ENCODE measurements at regions of chr6 and their contacts with region 1.

Region 1: GRCh38 chr6:109187399-109188114 is 92.2 kb downstream of the CEP57L1 start:
- DNase-seq: peak; percentile 25
- H3K4me3 Mint-ChIP-seq: no peak overlapping the region
- H3K27ac Mint-ChIP-seq: no peak overlapping the region
- H3K4me1 Mint-ChIP-seq: no peaks in the 10 kb centered on the region
- H3K27me3 Mint-ChIP-seq: peaks cover 39% of the 10 kb centered on the region

Region 2: DNA sequence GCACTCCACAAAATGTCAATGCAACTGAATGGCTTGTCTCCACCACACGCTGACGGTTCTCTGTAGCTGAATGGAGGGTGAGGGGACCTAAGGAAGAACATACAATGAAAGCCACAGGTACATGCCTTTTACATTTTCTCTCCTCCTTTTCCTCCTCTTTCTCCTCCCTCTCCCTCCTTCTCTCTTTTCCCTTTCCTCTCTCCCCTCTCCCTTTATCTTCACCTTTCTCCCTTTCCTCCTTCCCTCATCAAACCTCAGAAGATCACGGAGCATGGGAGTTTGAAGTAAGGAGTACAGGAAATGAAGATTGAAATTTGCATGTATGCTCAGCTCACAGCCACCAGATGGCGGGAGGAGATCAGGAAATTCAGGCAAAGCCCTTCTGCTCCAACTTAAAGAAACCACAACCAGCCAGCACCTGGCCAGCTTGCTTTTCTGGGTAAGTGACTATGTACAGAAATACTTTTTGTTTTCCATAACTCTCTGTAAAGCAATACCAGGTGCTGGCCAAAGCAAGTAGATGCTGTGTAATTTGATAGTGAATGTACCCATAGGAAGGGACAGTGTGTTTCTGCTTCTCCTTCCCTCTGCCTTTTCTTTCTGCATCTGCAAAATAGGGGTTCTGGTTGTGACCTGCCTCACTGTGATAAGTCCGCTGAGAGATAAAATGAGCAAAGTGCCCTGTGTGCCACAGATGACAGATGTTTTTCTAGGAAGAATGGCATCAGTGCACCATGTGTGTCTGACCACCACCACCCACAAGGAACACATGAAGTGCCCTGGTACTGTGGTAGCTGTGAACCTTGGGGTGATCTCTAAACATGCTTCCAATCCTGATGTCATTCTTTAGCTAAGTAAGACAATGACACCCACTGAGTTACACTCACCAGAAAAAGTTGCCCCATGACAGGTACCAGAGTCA is 645.5 kb before region 1 on chr6:
- intact Hi-C with region 1: loop called (anchors 1 kb)
- DNase-seq: peak; percentile 52
- H3K4me3 Mint-ChIP-seq: no peak overlapping the region
- H3K27ac Mint-ChIP-seq: no peak overlapping the region
- H3K4me1 Mint-ChIP-seq: peaks cover 10% of the 10 kb centered on the region
- H3K27me3 Mint-ChIP-seq: peaks cover 39% of the 10 kb centered on the region

Region 3: DNA sequence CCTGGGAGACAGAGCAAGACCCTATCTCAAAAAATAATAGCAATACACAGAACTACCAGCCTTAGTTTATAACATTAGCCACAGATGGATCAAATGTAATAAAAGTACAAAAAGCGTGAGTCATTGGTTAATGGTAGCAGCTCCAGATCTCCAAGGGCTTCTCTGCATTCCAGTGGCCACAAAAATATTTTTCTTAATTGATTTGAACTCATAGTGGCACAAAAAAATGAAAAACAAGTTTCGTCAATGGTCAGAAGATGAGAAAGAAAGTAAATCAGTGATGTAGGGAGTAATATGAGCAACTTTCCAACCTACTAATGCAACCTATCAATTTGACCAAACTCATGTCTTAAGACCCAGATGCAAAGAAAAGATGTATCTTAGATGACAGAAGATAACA is 12.6 kb before region 1 on chr6:
- intact Hi-C with region 1: no loop called
- DNase-seq: no peak
- H3K4me3 Mint-ChIP-seq: no peak overlapping the region
- H3K27ac Mint-ChIP-seq: no peak overlapping the region
- H3K4me1 Mint-ChIP-seq: no peaks in the 10 kb centered on the region
- H3K27me3 Mint-ChIP-seq: peaks cover 13% of the 10 kb centered on the region

Region 4: GRCh38 chr6:109308018-109308492 is 120.5 kb after region 1 on chr6:
- intact Hi-C with region 1: loop called (anchors 10 kb)
- DNase-seq: no peak
- H3K4me3 Mint-ChIP-seq: no peak overlapping the region
- H3K27ac Mint-ChIP-seq: no peak overlapping the region
- H3K4me1 Mint-ChIP-seq: peaks cover 12% of the 10 kb centered on the region
- H3K27me3 Mint-ChIP-seq: peaks cover 2% of the 10 kb centered on the region

Region 5: DNA sequence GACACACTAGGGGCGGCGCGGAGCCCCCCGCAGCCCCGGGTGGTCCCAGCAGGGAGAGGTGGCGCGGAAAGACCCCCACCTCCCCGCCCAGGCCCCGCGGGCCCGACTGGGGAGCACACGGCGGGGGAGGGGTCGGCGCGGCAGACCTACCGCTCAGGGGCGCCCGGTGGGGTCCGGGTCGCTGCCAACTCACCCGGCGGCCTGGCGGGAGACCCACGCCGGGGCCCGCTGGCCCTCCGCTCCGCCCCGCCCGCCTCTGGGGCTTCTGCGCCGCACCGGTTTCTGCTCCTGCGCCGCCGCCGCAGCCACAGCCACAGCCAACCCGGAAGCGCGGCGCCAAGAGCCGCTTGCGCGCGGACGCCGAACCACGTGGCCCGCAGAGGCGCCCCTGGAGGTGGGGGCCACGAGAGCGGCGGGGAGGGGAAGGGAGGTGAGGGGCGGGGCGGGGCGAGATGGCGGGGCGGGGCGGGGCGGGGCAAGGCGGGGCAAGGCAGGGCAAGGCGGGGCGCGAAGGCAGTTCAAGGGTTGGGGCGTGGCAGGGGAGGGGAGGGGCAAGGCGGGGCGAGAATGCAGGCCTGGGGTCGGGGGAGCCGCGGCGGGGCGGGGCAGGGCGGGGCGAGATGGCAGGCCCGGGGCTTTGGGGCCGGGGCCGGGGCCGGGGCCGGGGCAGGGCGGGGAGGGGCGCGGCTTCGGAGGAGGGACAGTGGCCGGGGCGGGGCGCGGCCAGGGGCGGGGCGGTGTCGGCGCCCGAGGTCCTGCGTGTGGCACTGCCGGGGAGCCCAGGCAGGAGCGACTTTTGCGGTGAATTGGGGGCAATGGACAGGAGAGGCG is 295.6 kb after region 1 on chr6 and contains the start of gene ZBTB24:
- intact Hi-C with region 1: loop called (anchors 5 kb)
- DNase-seq: peak; percentile 87
- H3K4me3 Mint-ChIP-seq: peak within 1 kb of the TSS; percentile 98
- H3K27ac Mint-ChIP-seq: peak within 1 kb of the TSS; percentile 92
- H3K4me1 Mint-ChIP-seq: peaks cover 47% of the 10 kb centered on the region
- H3K27me3 Mint-ChIP-seq: peaks cover 1% of the 10 kb centered on the region
- total RNA-seq, gene ZBTB24: 19.5 and 20.8 TPM in 2 replicates

Region 6: GRCh38 chr6:109772961-109773431 is 585.4 kb after region 1 on chr6:
- intact Hi-C with region 1: no loop called
- DNase-seq: no peak
- H3K4me3 Mint-ChIP-seq: no peak overlapping the region
- H3K27ac Mint-ChIP-seq: no peak overlapping the region
- H3K4me1 Mint-ChIP-seq: peaks cover 8% of the 10 kb centered on the region
- H3K27me3 Mint-ChIP-seq: no peaks in the 10 kb centered on the region

Region 7: DNA sequence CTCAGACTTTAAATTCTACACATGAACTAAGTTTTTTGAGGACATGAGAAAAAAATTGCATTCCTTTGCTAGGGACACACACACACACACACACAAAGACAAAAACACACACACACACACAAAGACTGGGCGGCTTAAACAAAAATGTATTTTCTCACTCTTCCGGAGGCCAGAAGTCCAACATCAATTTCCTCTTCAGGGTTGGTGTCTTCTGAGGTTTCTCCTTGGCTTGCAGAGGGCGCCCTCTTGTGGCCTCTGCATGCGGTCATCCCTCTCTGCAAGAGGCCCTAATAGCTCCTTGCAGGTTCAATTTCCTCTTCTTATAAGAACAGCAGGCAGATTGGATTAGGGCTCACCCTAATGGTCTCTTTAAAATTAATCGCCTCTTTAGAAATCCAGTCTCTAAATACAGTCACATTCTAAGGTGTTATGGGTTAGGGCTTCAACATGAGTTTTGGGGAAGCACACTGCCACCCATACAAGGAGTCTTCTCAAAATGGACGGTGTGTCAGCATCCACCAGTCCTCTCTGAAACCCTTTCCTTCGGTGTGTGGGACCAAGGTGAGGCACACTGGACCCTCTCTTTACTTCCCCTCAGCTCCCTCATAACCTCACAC is 851.9 kb after region 1 on chr6:
- intact Hi-C with region 1: loop called (anchors 5 kb)
- DNase-seq: peak; percentile 73
- H3K4me3 Mint-ChIP-seq: peak overlapping the region; percentile 83
- H3K27ac Mint-ChIP-seq: peak overlapping the region; percentile 59
- H3K4me1 Mint-ChIP-seq: peaks cover 19% of the 10 kb centered on the region
- H3K27me3 Mint-ChIP-seq: peaks cover 2% of the 10 kb centered on the region

Region 8: GRCh38 chr6:110140650-110141049 is 953.1 kb after region 1 on chr6:
- intact Hi-C with region 1: no loop called
- DNase-seq: no peak
- H3K4me3 Mint-ChIP-seq: no peak overlapping the region
- H3K27ac Mint-ChIP-seq: no peak overlapping the region
- H3K4me1 Mint-ChIP-seq: no peaks in the 10 kb centered on the region
- H3K27me3 Mint-ChIP-seq: peaks cover 2% of the 10 kb centered on the region

Measured in activated T-helper 1 cell treated with anti-CD3 and anti-CD28 coated beads, Interleukin-12 subunit alpha, Interleukin-12 subunit beta, Interleukin-2, Interleukin-4 antibody, amounts not matched to agents 30 ng/mL and 10 ng/mL and 1 ng/mL, durations not matched to agents 14 hours and 24 hours and 36 hours (primary cell).